Posterior vena cava (tissue), 2 donors: ENCODE measurements at regions of chr2 and their contacts with region 1.

Region 1: GRCh38 chr2:64442801-64443429 is 11.0 kb upstream of the LGALSL start:
- DNase-seq: no peak

Region 2: GRCh38 chr2:64551851-64552250 is 108.9 kb after region 1 on chr2:
- intact Hi-C with region 1: loop called in 1 of 2 experiments (anchors 5 kb)
- DNase-seq: no peak